ENCODE measurements at regions of chr12 and their contacts with region 1.

Region 1: DNA sequence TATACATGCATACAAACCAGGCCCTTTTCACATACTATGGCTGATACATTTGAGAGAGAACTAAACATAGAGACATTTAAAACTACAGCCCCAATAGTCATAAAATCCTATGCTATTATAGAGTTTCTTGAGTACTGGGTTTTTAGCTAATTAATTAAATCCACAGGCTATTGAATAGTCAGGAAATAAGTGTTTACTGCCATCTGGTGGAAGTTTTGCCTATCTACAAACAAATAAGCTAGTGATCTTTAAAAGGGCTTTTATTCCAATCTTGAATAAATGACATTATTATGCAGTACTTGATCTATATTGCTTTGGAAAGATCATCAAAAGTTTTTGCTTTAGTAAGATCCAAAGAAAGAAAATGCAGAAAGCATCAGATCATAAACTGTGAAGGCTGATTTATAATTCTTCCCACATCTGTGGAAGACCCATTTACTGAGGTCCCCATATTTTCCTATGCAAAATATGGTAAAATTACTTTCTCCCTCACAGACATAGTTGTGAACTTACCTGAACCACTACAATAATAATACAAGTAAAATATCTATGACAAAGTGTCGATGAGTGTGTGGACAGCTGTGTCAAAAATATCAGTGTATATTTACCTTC is 131.3 kb downstream of the ITPR2 start:
- DNase-seq: no peak
- H3K4me3 Mint-ChIP-seq: no peak overlapping the region
- H3K27ac Mint-ChIP-seq: no peak overlapping the region
- H3K4me1 Mint-ChIP-seq: peaks cover 6% of the 10 kb centered on the region
- H3K27me3 Mint-ChIP-seq: no peaks in the 10 kb centered on the region

Region 2: DNA sequence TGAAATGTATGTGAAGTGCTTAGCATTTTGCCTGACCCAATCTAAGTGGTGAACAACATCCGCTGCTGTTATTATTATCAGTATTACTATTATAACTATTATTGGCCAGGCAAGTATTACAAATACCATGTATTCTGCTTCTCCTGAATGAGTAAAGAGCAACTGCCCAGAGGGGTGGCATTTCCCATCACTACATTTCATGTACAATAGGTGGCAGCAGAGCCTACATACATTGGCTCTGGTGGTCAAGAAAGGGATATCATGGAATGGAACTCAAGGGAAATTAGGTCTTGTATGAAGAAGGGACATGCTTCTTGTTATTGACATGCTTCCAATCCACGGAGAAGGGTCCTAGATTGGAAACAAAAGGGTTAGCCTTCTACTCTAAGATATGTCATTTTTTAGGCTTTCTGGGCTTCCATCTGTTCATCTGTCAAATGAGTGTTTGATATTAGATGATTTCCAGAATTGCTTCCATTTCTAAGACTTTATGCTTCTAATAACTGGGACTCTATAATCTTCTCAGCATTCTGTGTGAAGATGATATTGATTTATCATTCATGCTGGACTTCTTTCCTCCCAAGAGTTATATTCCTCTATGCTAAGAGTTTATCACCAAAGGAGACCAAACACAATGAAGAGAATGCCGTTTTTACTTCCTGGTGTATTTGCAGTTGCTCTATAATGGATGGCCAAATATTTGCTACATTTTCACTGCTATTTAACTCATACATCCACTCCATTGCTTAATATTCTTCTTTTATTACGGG is 267.2 kb before region 1 on chr12:
- intact Hi-C with region 1: loop called (anchors 2 kb)
- DNase-seq: no peak
- H3K4me3 Mint-ChIP-seq: no peak overlapping the region
- H3K27ac Mint-ChIP-seq: no peak overlapping the region
- H3K4me1 Mint-ChIP-seq: no peaks in the 10 kb centered on the region
- H3K27me3 Mint-ChIP-seq: no peaks in the 10 kb centered on the region

Region 3: DNA sequence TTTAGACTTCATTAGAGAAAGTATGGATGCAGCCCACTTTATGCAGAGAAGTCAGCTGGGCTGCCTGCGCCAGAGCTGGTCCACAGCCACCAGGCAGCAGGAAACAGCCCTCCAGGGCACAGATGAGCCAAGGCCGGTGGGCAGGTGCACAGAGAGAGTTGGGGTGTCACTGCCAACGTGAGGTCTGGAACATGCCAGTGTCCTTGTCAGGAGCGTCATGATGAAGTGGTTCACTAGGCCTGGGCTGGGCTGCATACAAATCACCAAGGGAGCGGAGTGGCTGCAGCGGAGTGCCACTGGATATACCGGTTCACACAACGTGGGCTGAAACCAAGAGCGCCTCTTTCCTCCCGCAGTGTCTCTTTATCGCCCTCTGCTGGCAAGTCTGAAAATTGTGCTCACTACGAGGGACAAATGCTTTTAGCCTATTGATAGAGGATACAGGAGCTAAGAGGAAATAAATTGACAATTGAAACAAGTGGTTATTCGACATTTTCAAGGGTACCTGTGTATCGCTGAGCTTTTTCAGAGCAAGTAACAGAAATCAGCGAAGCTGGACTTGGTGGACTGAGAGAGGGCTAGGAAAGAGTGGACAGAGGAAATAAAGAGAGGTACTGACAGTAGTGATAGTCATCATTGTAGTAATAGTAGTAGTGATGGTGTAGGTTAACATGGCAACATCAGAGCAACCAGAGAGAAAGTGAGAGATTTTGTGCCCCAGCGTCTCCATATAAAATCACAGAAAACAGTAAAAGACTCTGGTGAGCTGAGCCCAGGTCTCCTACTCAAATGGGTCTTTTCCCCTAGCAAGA is 183.3 kb after region 1 on chr12:
- intact Hi-C with region 1: loop called (anchors 5 kb)
- DNase-seq: peak; percentile 96
- H3K4me3 Mint-ChIP-seq: peak overlapping the region; percentile 61
- H3K27ac Mint-ChIP-seq: no peak overlapping the region
- H3K4me1 Mint-ChIP-seq: peaks cover 13% of the 10 kb centered on the region
- H3K27me3 Mint-ChIP-seq: peaks cover 19% of the 10 kb centered on the region

Region 4: DNA sequence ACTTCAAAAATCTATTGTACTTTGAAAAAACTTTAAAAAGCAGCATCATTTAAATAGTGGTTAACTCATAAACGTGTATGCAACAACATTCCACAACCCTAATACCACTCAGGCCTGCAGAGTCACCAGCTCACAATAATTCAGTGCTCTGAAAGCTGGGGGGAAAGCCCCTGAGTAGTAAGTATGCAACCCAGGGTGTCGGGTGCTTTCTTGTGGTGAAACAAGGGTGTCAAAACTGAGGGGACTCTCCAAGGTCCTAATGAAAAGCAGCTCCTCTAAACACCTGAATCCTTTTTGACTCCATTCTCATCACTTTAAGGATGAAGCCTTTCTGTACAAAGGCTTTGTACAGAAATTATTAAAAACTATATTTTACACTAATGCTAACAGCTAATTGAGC is 270.3 kb after region 1 on chr12:
- intact Hi-C with region 1: no loop called
- DNase-seq: peak; percentile 86
- H3K4me3 Mint-ChIP-seq: no peak overlapping the region
- H3K27ac Mint-ChIP-seq: peak overlapping the region; percentile 21
- H3K4me1 Mint-ChIP-seq: peaks cover 16% of the 10 kb centered on the region
- H3K27me3 Mint-ChIP-seq: no peaks in the 10 kb centered on the region